ENCODE measurements at regions of chr10 and their contacts with region 1.

Region 1: GRCh38 chr10:97759158-97759887 is 12.5 kb downstream of the SFRP5 start:
- DNase-seq: peak; percentile 76 to 95
- H3K4me3 ChIP-seq: no peak overlapping the region
- H3K27ac ChIP-seq: no peak overlapping the region
- H3K4me1 ChIP-seq: peaks cover 0 to 14% (median 6%) of the 10 kb centered on the region in 4 experiments; a peak in 6 of 7 replicates
- H3K27me3 ChIP-seq: no peaks in the 10 kb centered on the region
- CTCF ChIP-seq: peak; percentile 96 to 99 (median 99)
- EP300 ChIP-seq: no peak
- POLR2A ChIP-seq: no peak
- RAD21 ChIP-seq: peak; percentile 95 to 97

Region 2: GRCh38 chr10:97601268-97602215 is 157.8 kb before region 1 on chr10:
- CTCF ChIA-PET with region 1: no interaction called
- POLR2A ChIA-PET with region 1: no interaction called
- DNase-seq: no peak
- H3K4me3 ChIP-seq: no peak overlapping the region
- H3K27ac ChIP-seq: no peak overlapping the region
- H3K4me1 ChIP-seq: peaks cover 0 to 2% (median under 1%) of the 10 kb centered on the region in 4 experiments; a peak in 1 of 7 replicates
- H3K27me3 ChIP-seq: no peaks in the 10 kb centered on the region
- CTCF ChIP-seq: no peak
- EP300 ChIP-seq: no peak
- POLR2A ChIP-seq: no peak
- RAD21 ChIP-seq: no peak

Region 3: GRCh38 chr10:97736902-97737769 is 22.2 kb before region 1 on chr10 and contains the start of gene ZFYVE27:
- CTCF ChIA-PET with region 1: interaction called, 10 read pairs
- POLR2A ChIA-PET with region 1: interaction called, 10 read pairs
- DNase-seq: peak; percentile 97 to 99
- H3K4me3 ChIP-seq: peak within 1 kb of the TSS; percentile 79 to 96 (median 89)
- H3K27ac ChIP-seq: peak within 1 kb of the TSS; percentile 73; the same call in 1 of the 2 replicates
- H3K4me1 ChIP-seq: peaks cover 0 to 6% (median 3%) of the 10 kb centered on the region in 4 experiments; a peak in 5 of 7 replicates
- H3K27me3 ChIP-seq: peaks cover 12 to 21% (median 17%) of the 10 kb centered on the region in 4 experiments
- CTCF ChIP-seq: no peak
- EP300 ChIP-seq: no peak
- POLR2A ChIP-seq: peak in 1 of 2 experiments; percentile 83; a peak in 2 of 3 replicates
- RAD21 ChIP-seq: no peak
- total RNA-seq, gene ZFYVE27: 19.8 and 22.7 TPM in 2 replicates

Region 4: DNA sequence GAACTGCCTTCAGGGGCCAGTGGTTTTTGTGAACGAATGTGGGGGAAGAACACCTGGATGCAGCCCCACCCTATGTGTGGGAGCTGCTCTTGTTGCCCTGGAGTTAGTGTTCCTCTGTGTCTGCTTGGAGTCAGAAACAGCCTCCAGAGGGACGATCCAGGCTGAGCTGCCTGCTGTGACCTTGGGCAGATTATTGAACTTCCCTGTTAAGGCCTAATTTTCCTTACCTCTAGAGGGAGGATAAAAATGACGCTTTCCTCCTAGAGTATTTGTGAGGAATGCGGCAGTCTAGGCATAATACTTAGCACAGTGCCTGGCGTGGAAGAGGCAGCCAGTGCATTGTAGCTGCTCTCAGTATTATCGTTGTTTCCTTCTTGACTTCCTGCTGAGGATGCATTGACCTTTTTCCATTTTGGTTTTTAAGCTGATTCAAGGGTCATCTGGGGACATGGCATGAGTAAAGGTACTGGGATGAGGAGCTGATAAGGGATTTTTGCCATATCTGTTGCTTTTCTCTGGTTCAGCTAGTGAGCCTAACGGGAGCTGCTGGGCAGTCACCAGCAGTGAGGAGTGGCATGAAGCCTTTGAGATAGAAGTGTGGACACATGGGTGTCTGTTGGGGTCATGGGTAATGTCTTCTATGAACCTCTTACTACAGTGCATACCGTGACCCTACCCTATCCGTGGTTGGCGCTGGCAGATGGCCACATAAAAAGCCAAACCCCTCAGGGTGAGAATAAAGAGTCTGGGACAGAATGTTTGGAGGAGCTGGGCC is 16.0 kb before region 1 on chr10:
- CTCF ChIA-PET with region 1: interaction called, 10 read pairs
- POLR2A ChIA-PET with region 1: interaction called, 6 read pairs
- DNase-seq: no peak
- H3K4me3 ChIP-seq: no peak overlapping the region
- H3K27ac ChIP-seq: no peak overlapping the region
- H3K4me1 ChIP-seq: no peaks in the 10 kb centered on the region; a peak in 1 of 7 replicates
- H3K27me3 ChIP-seq: no peaks in the 10 kb centered on the region
- CTCF ChIP-seq: no peak
- EP300 ChIP-seq: no peak
- POLR2A ChIP-seq: no peak
- RAD21 ChIP-seq: no peak

Region 5: DNA sequence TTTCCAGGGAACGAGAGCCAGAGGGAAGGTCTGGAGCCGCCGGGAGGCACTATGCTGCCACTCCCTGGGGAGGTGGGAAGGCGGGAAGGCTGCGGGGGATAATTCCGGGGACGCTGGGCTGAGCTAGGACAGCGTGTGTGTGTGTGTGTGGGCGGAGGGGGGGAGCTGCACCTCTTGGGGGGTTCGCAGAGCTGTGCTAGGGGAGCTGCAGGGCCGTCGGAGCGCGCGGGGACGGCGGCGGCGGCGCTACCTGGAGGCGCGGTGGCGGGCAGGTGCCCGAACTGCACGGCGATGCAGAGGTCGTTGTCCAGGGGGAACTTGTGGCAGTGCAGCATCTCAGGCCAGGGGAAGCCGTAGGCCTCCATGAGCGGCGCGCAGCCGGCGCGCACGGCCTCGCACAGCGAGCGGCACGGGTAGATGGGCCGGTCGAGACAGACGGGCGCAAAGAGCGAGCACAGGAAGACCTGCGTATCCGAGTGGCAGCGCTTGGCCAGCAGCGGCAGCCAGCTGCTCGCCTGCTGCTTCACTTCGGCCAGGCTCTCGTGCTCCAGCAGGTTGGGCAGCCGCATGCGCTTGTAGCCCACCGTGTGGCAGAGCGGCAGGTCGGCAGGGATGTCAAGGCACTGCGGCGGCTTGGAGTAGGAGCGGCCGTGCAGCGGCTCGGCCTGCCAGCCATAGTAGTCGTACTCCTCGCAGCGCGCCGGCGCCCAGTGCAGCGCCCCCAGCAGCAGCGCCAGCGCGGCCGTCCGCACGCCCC is 11.9 kb after region 1 on chr10:
- CTCF ChIA-PET with region 1: interaction called, 30 read pairs
- POLR2A ChIA-PET with region 1: interaction called, 30 read pairs
- DNase-seq: peak in 1 of 2 experiments; percentile 74
- H3K4me3 ChIP-seq: peak overlapping the region; percentile 54 to 60 (median 55)
- H3K27ac ChIP-seq: no peak overlapping the region
- H3K4me1 ChIP-seq: peaks cover 2 to 10% (median 7%) of the 10 kb centered on the region in 4 experiments; a peak in 6 of 7 replicates
- H3K27me3 ChIP-seq: peaks cover 14 to 51% (median 40%) of the 10 kb centered on the region in 4 experiments
- CTCF ChIP-seq: peak in 2 of 3 experiments; percentile 30 to 33; a peak in 2 of 4 replicates
- EP300 ChIP-seq: no peak
- POLR2A ChIP-seq: no peak
- RAD21 ChIP-seq: 0 out of 4 replicates have a peak, but pooled peaks of 1 of the 2 experiments have one; percentile 14

Region 6: GRCh38 chr10:97780841-97781617 is 21.7 kb after region 1 on chr10:
- CTCF ChIA-PET with region 1: interaction called, 10 read pairs
- POLR2A ChIA-PET with region 1: interaction called, 4 read pairs
- DNase-seq: no peak
- H3K4me3 ChIP-seq: no peak overlapping the region
- H3K27ac ChIP-seq: no peak overlapping the region
- H3K4me1 ChIP-seq: peaks cover 0 to 14% (median 5%) of the 10 kb centered on the region in 4 experiments; a peak in 6 of 7 replicates
- H3K27me3 ChIP-seq: no peaks in the 10 kb centered on the region
- CTCF ChIP-seq: no peak
- EP300 ChIP-seq: no peak
- POLR2A ChIP-seq: no peak
- RAD21 ChIP-seq: peak in 1 of 2 experiments; percentile 1; a peak in 1 of 4 replicates

Measured in H1 (cell line).